ENCODE measurements at regions of chr2 and their contacts with region 1.

Region 1: DNA sequence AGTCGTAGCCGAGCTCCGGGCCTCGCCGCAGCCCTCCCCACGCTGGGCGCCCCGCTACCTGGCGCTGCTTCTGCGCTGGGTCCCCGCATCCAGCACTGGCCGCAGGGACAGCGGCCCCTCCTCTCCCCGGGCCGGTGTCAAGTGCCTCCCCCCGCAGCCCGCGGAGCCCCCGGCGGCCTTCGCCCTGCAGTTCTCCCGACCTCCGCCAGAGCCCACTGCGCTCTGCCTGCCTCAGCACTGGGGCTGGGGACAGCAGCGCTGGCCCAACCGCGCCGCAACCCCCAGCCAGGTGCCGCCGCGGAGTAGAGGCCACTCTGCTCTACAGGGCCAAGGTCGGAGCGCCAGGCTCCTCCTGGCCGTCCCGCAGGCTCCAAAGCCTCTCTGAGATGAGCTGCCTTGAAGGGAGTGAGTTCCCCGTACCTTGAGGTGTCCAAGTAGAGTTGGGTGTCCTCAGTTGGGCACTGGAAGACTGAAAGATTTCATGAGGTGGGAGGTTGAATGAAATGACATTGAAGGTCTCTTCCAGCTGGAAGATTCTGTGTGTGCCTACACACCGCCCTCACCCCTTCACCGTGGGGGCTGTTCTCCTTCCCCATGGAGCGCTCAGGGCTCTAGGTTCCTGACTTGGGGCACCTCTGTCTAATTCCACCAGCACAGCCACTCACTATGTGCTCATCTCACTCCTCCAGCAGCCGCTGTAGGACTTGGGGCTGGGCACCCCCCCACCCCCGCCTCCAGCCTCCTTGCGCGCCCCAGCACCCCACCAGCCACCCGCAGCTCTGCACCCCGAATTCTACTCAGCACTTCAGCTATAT is 854 bp upstream of the DNMT3A start:
- DNase-seq: peak; percentile 87
- H3K4me3 ChIP-seq: peak overlapping the region; percentile 69 to 82 (median 78)
- H3K27ac ChIP-seq: peak overlapping the region; percentile 81 to 91 (median 86)
- H3K4me1 ChIP-seq: peaks cover 15 to 34% (median 22%) of the 10 kb centered on the region in 4 donors
- H3K27me3 ChIP-seq: no peaks in the 10 kb centered on the region
- CTCF ChIP-seq: peak; percentile 98 to 99 (median 98)
- EP300 ChIP-seq: no peak
- POLR2A ChIP-seq: no peak

Region 2: GRCh38 chr2:25276569-25277465 is 65.8 kb before region 1 on chr2:
- in situ Hi-C with region 1: no loop called
- intact Hi-C with region 1: loop called (anchors 10 kb)
- DNase-seq: peak; percentile 60
- H3K4me3 ChIP-seq: peak overlapping the region; percentile 9 to 45 (median 30)
- H3K27ac ChIP-seq: peak overlapping the region; percentile 76 to 85 (median 80)
- H3K4me1 ChIP-seq: peaks cover 0 to 46% (median 18%) of the 10 kb centered on the region in 4 donors
- H3K27me3 ChIP-seq: no peaks in the 10 kb centered on the region
- CTCF ChIP-seq: peak; percentile 54 to 73 (median 71)
- EP300 ChIP-seq: no peak
- POLR2A ChIP-seq: no peak

Region 3: DNA sequence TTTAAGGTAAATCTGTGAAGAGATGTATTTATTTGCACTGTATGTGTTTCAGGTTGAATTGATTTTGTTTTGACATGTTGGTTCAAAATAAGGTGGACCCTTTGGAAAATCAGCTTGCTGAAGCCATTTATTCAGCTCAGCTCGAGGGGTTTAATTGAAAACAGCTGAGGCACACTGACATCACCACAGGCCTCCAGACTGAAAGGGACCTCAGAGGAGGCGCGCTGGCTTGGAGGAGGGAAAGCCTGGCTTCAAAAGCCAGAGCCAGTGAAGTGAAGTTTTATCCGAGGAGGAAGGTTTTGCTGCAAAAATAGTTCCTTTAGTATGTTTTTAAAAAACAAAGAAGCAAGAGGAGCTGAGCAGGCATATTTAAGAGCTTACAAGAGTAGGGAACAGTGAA is 26.1 kb after region 1 on chr2:
- in situ Hi-C with region 1: no loop called
- intact Hi-C with region 1: loop called (anchors 2 kb)
- DNase-seq: no peak
- H3K4me3 ChIP-seq: no peak overlapping the region
- H3K27ac ChIP-seq: no peak overlapping the region
- H3K4me1 ChIP-seq: no peaks in the 10 kb centered on the region
- H3K27me3 ChIP-seq: no peaks in the 10 kb centered on the region
- CTCF ChIP-seq: no peak
- EP300 ChIP-seq: no peak
- POLR2A ChIP-seq: no peak

Region 4: GRCh38 chr2:25376750-25377621 is 34.4 kb after region 1 on chr2:
- in situ Hi-C with region 1: no loop called
- intact Hi-C with region 1: loop called (anchors 2 kb)
- DNase-seq: peak; percentile 91
- H3K4me3 ChIP-seq: peak overlapping the region in 1 of 4 donors; percentile 10
- H3K27ac ChIP-seq: peak overlapping the region; percentile 45 to 60 (median 52)
- H3K4me1 ChIP-seq: peaks cover 6 to 20% (median 13%) of the 10 kb centered on the region in 4 donors
- H3K27me3 ChIP-seq: no peaks in the 10 kb centered on the region
- CTCF ChIP-seq: peak; percentile 53 to 97 (median 89)
- EP300 ChIP-seq: no peak
- POLR2A ChIP-seq: no peak

Region 5: DNA sequence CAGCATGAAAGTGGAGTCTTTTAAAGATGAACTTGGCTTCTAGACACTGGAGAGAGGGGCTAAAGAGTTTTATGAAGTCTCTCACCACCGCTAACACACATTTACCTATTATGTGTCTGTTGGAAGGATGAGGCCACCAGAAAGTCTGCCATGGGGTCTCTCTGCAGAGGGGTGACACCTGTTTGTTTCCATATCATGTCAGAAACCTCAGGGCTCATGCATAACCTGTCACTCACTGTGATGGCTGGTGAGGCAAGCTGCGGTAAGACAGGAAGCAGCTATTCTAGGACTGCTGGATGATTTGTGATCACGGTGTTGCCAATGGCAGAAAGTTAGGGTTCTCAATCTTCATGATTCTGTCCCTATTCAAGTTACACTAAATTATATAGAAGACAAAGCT is 59.9 kb after region 1 on chr2:
- in situ Hi-C with region 1: no loop called
- intact Hi-C with region 1: no loop called
- DNase-seq: no peak
- H3K4me3 ChIP-seq: no peak overlapping the region
- H3K27ac ChIP-seq: peak overlapping the region in 2 of 4 donors; percentile 41 to 49
- H3K4me1 ChIP-seq: no peaks in the 10 kb centered on the region
- H3K27me3 ChIP-seq: no peaks in the 10 kb centered on the region
- CTCF ChIP-seq: no peak
- EP300 ChIP-seq: no peak
- POLR2A ChIP-seq: no peak